Gastrocnemius medialis (tissue), 4 donors: ENCODE measurements at regions of chr13 and their contacts with region 1.

Region 1: GRCh38 chr13:79405829-79406596 is at the start of gene RBM26:
- DNase-seq: peak; percentile 88 to 90
- ATAC-seq: peak; percentile 92 to 94
- H3K4me3 ChIP-seq: peak within 1 kb of the TSS; percentile 87 to 96 (median 94)
- H3K27ac ChIP-seq: peak within 1 kb of the TSS; percentile 94 to 98 (median 96)
- H3K4me1 ChIP-seq: peaks cover 48 to 54% of the 10 kb centered on the region in 2 donors
- H3K27me3 ChIP-seq: no peaks in the 10 kb centered on the region
- CTCF ChIP-seq: peak in 2 of 5 experiments; percentile 18 to 19
- POLR2A ChIP-seq: peak; percentile 51 to 70
- total RNA-seq, gene RBM26: 14.9 to 44.8 (median 23.1) TPM

Region 2: DNA sequence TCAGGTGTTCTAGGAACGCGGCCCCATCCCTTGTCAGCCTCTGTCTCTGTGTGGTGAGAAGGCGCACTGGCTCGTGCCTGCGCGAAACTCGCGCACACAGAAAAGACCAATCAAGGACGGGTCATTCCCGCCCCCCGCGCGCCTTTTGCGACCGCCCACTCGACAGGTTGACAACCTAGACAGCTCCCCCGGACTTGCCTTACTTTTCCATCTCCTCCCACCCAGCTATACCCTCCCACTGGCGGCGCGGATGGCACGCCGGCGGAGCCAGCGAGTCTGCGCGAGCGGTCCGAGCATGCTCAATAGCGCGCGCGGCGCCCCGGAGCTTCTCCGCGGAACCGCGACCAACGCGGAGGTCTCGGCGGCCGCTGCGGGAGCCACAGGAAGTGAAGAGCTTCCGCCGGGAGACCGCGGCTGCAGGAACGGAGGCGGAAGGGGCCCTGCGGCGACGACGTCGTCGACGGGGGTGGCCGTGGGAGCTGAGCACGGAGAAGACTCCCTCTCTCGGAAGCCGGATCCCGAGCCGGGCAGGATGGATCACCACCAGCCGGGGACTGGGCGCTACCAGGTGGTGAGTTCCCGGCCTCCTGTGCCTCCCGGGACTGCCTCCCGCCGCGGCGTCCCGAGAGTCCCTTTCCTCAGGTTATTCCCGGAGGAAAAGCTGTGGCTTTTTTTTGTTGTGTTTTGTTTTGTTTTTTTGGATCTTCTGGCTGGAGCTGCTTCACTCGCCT is 75.1 kb after region 1 on chr13 and contains the start of gene NDFIP2:
- in situ Hi-C with region 1: no loop called
- intact Hi-C with region 1: loop called (anchors 5 kb)
- DNase-seq: peak; percentile 62 to 80
- ATAC-seq: peak; percentile 81 to 84
- H3K4me3 ChIP-seq: peak within 1 kb of the TSS; percentile 80 to 97 (median 86)
- H3K27ac ChIP-seq: peak within 1 kb of the TSS; percentile 80 to 88 (median 86)
- H3K4me1 ChIP-seq: peaks cover 48 to 49% of the 10 kb centered on the region in 2 donors
- H3K27me3 ChIP-seq: no peaks in the 10 kb centered on the region
- CTCF ChIP-seq: peak in 1 of 5 experiments; percentile 22
- POLR2A ChIP-seq: peak; percentile 54 to 70
- total RNA-seq, gene NDFIP2: 21.8 to 47.8 (median 31.9) TPM

Region 3: GRCh38 chr13:79631051-79631659 is 225.1 kb after region 1 on chr13:
- in situ Hi-C with region 1: no loop called
- intact Hi-C with region 1: loop called (anchors 10 kb)
- DNase-seq: peak; percentile 5 to 38
- ATAC-seq: peak; percentile 99
- H3K4me3 ChIP-seq: no peak overlapping the region
- H3K27ac ChIP-seq: peak overlapping the region in 3 of 4 donors; percentile 52 to 65 (median 61)
- H3K4me1 ChIP-seq: peaks cover 4 to 8% of the 10 kb centered on the region in 2 donors
- H3K27me3 ChIP-seq: no peaks in the 10 kb centered on the region
- CTCF ChIP-seq: peak in 4 of 5 experiments; percentile 19 to 58 (median 56)
- POLR2A ChIP-seq: no peak